WTC11 (cell line): ENCODE measurements at regions of chr9 and their contacts with region 1.

Region 1: DNA sequence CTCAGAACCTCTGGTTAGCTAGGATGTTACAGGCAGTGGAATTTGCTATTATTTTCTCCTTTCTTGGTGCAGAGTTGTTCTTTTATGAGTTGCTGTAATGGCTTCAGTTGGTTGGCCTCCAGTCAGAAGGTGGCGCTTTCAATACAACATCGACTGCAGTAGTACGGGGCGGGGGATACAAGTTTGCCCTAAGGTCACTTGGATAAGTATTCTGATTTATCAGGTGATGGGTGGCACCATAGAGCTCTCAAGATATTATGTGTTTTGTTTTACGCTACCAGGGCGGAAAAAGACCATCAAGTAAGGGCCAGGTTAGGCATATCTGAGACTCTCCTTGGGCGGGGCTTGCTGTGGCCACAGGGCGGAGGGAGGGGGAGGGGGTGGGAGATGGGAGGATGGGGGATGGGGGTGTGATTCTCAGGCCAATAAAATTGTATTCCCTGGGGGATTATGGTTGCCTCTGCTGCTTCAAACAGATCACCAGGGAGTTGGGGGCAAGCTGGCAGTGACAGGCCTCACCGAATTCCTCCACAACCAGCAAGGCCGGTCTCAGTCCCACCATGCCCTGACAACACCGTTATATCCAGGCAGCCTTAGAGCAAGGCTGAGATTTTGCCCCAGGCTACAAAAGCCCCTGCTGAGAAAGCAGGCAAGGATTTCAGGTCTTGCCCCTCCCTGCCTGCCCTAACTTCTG is 15.9 kb upstream of the RNF38 start:
- DNase-seq: peak; percentile 45
- ATAC-seq: peak; percentile 89
- H3K4me3 Mint-ChIP-seq: peak overlapping the region; percentile 49
- H3K27ac Mint-ChIP-seq: peak overlapping the region; percentile 75
- H3K4me1 Mint-ChIP-seq: peaks cover 39% of the 10 kb centered on the region
- H3K27me3 Mint-ChIP-seq: no peaks in the 10 kb centered on the region
- CTCF ChIP-seq: no peak

Region 2: GRCh38 chr9:36218411-36218901 is 197.5 kb before region 1 on chr9:
- CTCF ChIA-PET with region 1: no interaction called
- POLR2A ChIA-PET with region 1: no interaction called
- DNase-seq: no peak
- ATAC-seq: no peak
- H3K4me3 Mint-ChIP-seq: no peak overlapping the region
- H3K27ac Mint-ChIP-seq: peak overlapping the region; percentile 75; the same call in 1 of the 2 replicates
- H3K4me1 Mint-ChIP-seq: peaks cover 2% of the 10 kb centered on the region; the same call in 1 of the 2 replicates
- H3K27me3 Mint-ChIP-seq: no peaks in the 10 kb centered on the region
- CTCF ChIP-seq: no peak

Region 3: GRCh38 chr9:36306471-36307306 is 109.3 kb before region 1 on chr9:
- CTCF ChIA-PET with region 1: no interaction called
- POLR2A ChIA-PET with region 1: no interaction called
- DNase-seq: no peak
- ATAC-seq: peak; percentile 34
- H3K4me3 Mint-ChIP-seq: no peak overlapping the region
- H3K27ac Mint-ChIP-seq: peak overlapping the region; percentile 73
- H3K4me1 Mint-ChIP-seq: peaks cover 5% of the 10 kb centered on the region
- H3K27me3 Mint-ChIP-seq: no peaks in the 10 kb centered on the region
- CTCF ChIP-seq: no peak

Region 4: GRCh38 chr9:36436909-36437308 is 20.9 kb after region 1 on chr9:
- CTCF ChIA-PET with region 1: interaction called, 16 read pairs
- POLR2A ChIA-PET with region 1: interaction called, 3 read pairs
- DNase-seq: no peak
- ATAC-seq: no peak; the same call in 1 of the 2 replicates
- H3K4me3 Mint-ChIP-seq: no peak overlapping the region
- H3K27ac Mint-ChIP-seq: peak overlapping the region; percentile 89; the same call in 1 of the 2 replicates
- H3K4me1 Mint-ChIP-seq: peaks cover 43% of the 10 kb centered on the region
- H3K27me3 Mint-ChIP-seq: no peaks in the 10 kb centered on the region
- CTCF ChIP-seq: no peak